Heart left ventricle (tissue), 16 donors: ENCODE measurements at regions of chr7 and their contacts with region 1.

Region 1: GRCh38 chr7:104923010-104923421 is 91.0 kb upstream of the KMT2E start:
- DNase-seq: peak; percentile 74 to 81 (median 75)
- ATAC-seq: peak; percentile 82 to 94 (median 90)
- H3K4me3 ChIP-seq: no peak overlapping the region
- H3K27ac ChIP-seq: peak overlapping the region in 9 of 12 donors; percentile 21 to 78 (median 58)
- H3K4me1 ChIP-seq: peaks cover 0 to 21% (median 9%) of the 10 kb centered on the region in 12 donors
- H3K27me3 ChIP-seq: no peaks in the 10 kb centered on the region
- CTCF ChIP-seq: peak; percentile 47 to 83 (median 74)
- POLR2A ChIP-seq: no peak

Region 2: DNA sequence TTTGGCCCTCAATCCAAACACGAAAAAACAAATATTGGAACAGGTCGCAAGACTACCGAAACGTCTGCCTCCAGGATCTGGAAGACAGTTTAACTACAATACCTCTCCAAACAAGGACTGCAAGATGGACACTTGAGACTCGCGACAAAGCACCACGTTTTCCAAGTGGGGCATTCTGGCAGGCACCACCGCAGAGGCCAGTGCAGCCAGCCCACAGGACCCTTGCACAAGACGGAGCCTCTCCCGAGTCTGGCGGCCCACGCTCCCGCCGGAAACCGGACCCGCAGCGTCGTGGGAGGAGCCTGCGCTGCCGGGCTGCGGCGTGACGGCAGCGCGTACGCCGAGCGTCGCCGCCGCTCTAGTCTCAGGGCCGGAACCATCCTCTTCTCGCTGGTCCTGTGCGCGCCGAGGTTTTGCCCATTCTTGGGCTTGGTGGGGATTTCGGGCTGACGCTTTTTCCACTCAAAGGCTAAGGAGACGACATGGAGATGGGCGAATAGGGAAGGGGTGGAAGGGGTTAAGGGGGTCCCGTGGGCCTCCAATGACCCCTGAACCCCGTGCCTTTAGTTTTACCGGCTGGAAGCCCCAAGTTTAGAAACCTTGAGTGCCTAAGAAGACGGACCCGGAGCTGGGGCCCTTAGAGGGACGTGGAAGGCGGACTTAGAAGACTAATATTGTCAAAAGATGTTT is 715.1 kb before region 1 on chr7 and contains the start of gene ORC5:
- intact Hi-C with region 1: loop called in 1 of 10 experiments (anchors 5 kb)
- DNase-seq: peak; percentile 75 to 88 (median 85)
- ATAC-seq: peak; percentile 98 to 100 (median 100)
- H3K4me3 ChIP-seq: peak within 1 kb of the TSS; percentile 45 to 97 (median 82)
- H3K27ac ChIP-seq: peak within 1 kb of the TSS in 11 of 12 donors; percentile 58 to 91 (median 82)
- H3K4me1 ChIP-seq: peaks cover 0 to 32% (median 20%) of the 10 kb centered on the region in 12 donors
- H3K27me3 ChIP-seq: no peaks in the 10 kb centered on the region
- CTCF ChIP-seq: no peak
- POLR2A ChIP-seq: peak in 1 of 2 donors; percentile 84
- total RNA-seq, gene ORC5: 5.0 to 11.2 (median 7.0) TPM

Region 3: DNA sequence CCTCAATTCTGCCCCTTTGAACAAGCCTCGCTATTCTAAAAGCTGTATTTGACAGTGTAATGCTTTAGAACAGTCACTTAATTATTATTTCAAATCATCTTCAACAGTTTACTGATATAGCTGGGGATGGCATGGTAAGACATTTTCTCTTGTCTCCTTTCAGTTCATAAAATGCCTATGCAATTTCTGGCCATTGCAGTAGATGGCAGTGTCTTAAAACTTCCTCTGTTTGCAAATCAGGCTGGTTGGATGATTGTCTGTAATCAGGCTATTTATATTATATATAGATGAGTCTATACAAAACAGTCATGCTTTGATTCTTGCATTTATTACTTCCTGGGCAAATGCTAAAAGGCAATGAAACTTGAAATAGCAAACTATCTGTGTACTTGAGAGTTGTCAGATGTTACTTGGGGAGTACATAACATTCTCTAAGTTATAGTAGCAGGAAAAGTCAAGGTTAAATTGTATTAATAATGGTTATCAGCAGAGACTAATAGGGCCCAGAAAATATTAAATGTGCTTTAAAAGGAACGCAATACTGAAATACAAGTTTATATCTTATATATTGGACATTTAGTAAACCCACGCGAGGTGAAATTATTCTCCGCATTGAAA is 650.1 kb before region 1 on chr7:
- intact Hi-C with region 1: loop called in 4 of 10 experiments (anchors 5 kb)
- DNase-seq: no peak
- ATAC-seq: no peak
- H3K4me3 ChIP-seq: no peak overlapping the region
- H3K27ac ChIP-seq: no peak overlapping the region
- H3K4me1 ChIP-seq: no peaks in the 10 kb centered on the region
- H3K27me3 ChIP-seq: no peaks in the 10 kb centered on the region
- CTCF ChIP-seq: peak in 11 of 12 donors; percentile 27 to 57 (median 42)
- POLR2A ChIP-seq: no peak

Region 4: GRCh38 chr7:104848138-104848990 is 74.7 kb before region 1 on chr7:
- intact Hi-C with region 1: no loop called
- DNase-seq: peak in 3 of 5 donors; percentile 13 to 31 (median 27)
- ATAC-seq: peak in 1 of 4 donors; percentile 41
- H3K4me3 ChIP-seq: no peak overlapping the region
- H3K27ac ChIP-seq: no peak overlapping the region
- H3K4me1 ChIP-seq: no peaks in the 10 kb centered on the region
- H3K27me3 ChIP-seq: peaks cover 0 to 15% (median 0%) of the 10 kb centered on the region in 9 donors
- CTCF ChIP-seq: peak; percentile 62 to 84 (median 75)
- POLR2A ChIP-seq: no peak

Region 5: DNA sequence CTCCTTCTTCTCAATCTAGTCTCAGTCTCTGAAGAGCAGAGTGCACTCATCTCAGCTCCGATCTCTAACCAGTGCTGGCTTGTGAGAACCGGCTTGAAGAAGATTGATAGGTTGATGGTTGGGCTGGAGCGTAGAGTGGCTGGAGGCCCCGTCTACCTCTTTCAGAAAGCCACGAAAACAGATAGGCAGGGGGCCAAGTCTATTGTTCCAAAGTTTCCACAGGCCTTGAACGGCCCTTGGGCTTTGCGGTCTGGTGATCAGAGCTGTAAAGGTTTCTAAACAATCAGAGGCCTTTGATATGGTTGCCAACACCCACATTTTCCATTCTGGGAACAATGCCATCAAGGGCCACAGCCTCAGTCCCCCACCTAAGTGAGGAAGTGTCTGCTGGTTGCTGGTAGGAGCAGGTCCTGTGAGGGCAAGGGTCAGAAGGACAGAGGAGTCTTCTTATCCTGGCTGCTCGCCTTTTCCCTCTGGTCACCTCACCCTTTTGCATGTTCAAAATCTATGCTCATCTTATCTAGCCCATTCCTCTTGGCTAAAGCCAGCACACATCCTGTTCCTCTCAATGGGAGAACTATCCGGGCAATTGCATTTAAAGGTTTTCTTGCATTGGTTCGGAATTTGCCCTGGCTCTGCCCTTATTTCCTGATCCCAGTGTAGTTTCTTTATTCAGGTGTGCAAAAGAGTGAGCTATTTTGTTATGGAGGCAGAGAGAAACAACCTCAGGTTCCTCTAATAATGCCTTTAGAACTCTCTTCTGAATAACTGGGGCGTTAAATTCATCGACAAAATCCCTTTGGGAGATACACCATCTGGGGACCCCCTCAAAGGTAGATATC is 20.7 kb after region 1 on chr7:
- intact Hi-C with region 1: loop called in 1 of 10 experiments (anchors 1 kb)
- DNase-seq: peak in 4 of 5 donors; percentile 77 to 91 (median 83)
- ATAC-seq: peak; percentile 26 to 65 (median 52)
- H3K4me3 ChIP-seq: peak overlapping the region in 3 of 12 donors; percentile 0 to 32 (median 6)
- H3K27ac ChIP-seq: peak overlapping the region; percentile 79 to 99 (median 92)
- H3K4me1 ChIP-seq: peaks cover 3 to 55% (median 30%) of the 10 kb centered on the region in 12 donors
- H3K27me3 ChIP-seq: no peaks in the 10 kb centered on the region
- CTCF ChIP-seq: no peak
- POLR2A ChIP-seq: no peak

Region 6: DNA sequence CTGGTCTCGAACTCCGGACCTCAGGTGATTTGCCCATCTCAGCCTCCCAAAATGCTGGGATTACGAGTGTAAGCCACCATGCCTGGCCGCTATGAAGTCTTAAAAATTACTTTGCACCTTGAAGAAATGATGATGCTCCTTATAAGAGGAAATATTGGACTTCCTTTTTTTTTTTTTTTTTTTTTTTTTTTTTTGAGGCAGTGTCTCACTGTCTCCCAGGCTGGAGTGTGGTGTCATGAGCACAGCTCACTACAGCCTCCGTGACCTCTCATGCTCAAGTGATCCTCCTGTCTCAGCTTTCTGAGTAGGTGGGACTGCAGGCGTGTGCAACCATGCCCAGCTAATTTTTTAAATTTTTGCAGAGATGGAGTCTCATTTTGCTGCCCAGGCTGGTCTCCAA is 156.3 kb after region 1 on chr7:
- intact Hi-C with region 1: loop called in 1 of 10 experiments (anchors 10 kb)
- DNase-seq: no peak
- ATAC-seq: peak in 1 of 4 donors; percentile 45
- H3K4me3 ChIP-seq: no peak overlapping the region
- H3K27ac ChIP-seq: no peak overlapping the region
- H3K4me1 ChIP-seq: peaks cover 0 to 5% (median 0%) of the 10 kb centered on the region in 12 donors
- H3K27me3 ChIP-seq: no peaks in the 10 kb centered on the region
- CTCF ChIP-seq: no peak
- POLR2A ChIP-seq: no peak

Region 7: DNA sequence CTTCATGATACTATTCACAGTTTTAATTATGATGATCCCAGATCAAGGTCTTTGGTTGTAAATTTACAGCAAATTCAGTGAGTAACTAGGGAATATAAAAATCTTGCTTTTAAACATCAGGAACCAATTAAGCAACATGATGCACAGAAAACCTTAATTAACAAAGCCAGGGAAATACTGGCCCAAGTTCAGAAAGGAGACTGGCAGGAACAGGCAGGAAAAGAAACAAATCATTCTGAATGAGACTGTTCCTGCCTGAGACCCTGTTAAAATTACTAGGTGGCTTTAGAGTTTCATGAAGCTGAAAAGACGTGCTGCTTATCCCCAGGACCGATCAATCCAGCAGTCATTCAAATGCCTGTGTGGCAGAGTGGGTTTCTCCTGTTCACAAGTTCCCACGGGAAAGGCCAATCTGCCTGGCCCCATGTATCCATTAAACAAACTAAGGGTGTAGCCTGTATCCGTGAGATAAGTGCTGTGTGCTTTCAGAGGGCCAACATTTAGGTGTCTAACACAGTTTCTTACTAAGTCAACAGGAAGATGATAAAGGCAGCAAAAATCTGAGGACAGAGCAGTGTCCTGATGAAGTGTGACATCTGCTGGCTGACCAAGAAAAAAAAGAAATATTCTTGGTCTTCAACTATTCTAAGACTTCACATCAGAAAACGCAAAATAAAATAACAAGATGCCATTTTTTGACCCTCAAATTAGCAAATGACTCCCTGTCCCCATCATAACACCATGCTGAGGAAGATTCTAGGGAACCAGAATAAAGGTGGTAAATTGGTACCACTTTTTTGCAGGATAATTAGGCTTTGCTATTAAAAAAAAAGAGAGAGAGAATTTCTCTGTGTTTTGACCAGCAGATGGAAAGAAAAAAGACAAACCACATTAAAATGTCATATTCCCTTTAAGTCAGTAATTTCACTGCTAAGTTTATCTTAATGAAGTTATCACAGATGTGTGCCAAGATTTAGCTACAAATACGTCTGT is 564.9 kb after region 1 on chr7:
- intact Hi-C with region 1: loop called in 3 of 10 experiments (anchors 2 to 10 kb)
- DNase-seq: peak in 1 of 5 donors; percentile 11
- ATAC-seq: peak in 3 of 4 donors; percentile 71 to 87 (median 87)
- H3K4me3 ChIP-seq: no peak overlapping the region
- H3K27ac ChIP-seq: peak overlapping the region in 8 of 12 donors; percentile 2 to 29 (median 18)
- H3K4me1 ChIP-seq: peaks cover 0 to 12% (median 4%) of the 10 kb centered on the region in 12 donors
- H3K27me3 ChIP-seq: no peaks in the 10 kb centered on the region
- CTCF ChIP-seq: peak; percentile 12 to 58 (median 40)
- POLR2A ChIP-seq: peak in 1 of 2 donors; percentile 10